CD8-positive, alpha-beta T cell (primary cell): ENCODE measurements at regions of chr2 and their contacts with region 1.

Region 1: GRCh38 chr2:241609859-241610793 is 26.8 kb downstream of the THAP4 start:
- DNase-seq: peak; percentile 81 to 96 (median 92)
- ATAC-seq: peak; percentile 99
- H3K4me3 ChIP-seq: peak overlapping the region; percentile 53 to 59
- H3K4me3 Mint-ChIP-seq: peak overlapping the region; percentile 63
- H3K27ac ChIP-seq: peak overlapping the region; percentile 51 to 77
- H3K27ac Mint-ChIP-seq: peak overlapping the region; percentile 72
- H3K4me1 ChIP-seq: peaks cover 23% of the 10 kb centered on the region
- H3K4me1 Mint-ChIP-seq: peaks cover 26% of the 10 kb centered on the region
- H3K27me3 ChIP-seq: no peaks in the 10 kb centered on the region
- H3K27me3 Mint-ChIP-seq: no peaks in the 10 kb centered on the region
- CTCF ChIP-seq: peak; percentile 63

Region 2: DNA sequence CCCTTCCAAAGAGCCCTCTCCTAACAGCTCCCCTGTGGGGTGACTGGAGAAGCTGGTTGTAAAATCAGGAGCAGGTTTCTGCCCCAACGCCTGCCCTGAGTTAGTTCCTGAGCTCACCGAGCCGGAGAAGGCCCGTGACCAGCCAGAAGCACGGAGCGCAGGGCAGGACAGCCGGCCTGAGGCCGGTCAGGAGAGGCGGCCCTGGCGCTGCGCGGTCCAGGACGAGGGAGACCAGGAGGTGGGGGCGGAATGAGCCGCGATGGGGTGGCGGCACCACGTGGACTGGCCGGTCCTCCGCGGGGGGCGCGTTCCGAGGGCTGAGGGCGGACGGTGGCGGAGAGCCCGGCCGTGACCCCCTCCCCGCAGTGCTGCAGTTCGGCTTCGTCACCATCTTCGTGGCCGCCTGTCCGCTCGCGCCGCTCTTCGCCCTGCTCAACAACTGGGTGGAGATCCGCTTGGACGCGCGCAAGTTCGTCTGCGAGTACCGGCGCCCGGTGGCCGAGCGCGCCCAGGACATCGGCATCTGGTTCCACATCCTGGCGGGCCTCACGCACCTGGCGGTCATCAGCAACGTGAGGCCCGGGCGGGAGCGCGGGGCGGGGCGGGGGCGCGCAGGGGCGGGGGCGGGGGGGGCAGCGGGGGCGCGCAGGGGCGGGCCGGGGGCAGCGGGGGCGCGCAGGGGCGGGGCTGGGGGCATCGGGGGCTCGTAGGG is 392.6 kb before region 1 on chr2:
- CTCF ChIA-PET with region 1: no interaction called
- POLR2A ChIA-PET with region 1: no interaction called
- intact Hi-C with region 1: loop called in 1 of 2 experiments (anchors 5 kb)
- DNase-seq: peak in 5 of 9 experiments; percentile 25 to 64 (median 58)
- ATAC-seq: peak; percentile 42
- H3K4me3 ChIP-seq: peak overlapping the region; percentile 48 to 59
- H3K4me3 Mint-ChIP-seq: peak overlapping the region; percentile 77
- H3K27ac ChIP-seq: peak overlapping the region in 1 of 2 experiments; percentile 32
- H3K27ac Mint-ChIP-seq: no peak overlapping the region
- H3K4me1 ChIP-seq: peaks cover 5% of the 10 kb centered on the region
- H3K4me1 Mint-ChIP-seq: peaks cover 14% of the 10 kb centered on the region
- H3K27me3 ChIP-seq: no peaks in the 10 kb centered on the region
- H3K27me3 Mint-ChIP-seq: no peaks in the 10 kb centered on the region
- CTCF ChIP-seq: no peak

Region 3: DNA sequence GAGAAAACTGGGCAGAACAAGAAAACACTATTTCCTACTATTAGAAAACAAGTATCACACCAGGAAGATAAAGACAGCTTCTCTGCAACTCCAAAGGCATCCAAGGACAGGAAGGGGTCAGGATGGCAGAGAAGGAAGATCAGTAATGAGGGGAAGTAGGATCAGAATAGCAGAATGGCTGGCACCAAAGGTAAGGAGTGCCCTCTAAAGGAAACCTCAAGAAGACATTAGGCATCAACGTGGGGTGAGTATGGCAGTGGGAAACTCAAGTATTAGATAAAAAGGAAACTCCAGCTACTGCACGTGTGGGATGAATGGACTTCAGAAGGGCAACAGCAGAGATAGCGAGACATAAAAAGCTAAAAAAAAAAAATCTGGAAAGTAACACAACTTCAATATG is 320.5 kb before region 1 on chr2:
- CTCF ChIA-PET with region 1: no interaction called
- POLR2A ChIA-PET with region 1: no interaction called
- intact Hi-C with region 1: no loop called
- DNase-seq: no peak
- ATAC-seq: no peak
- H3K4me3 ChIP-seq: no peak overlapping the region
- H3K4me3 Mint-ChIP-seq: no peak overlapping the region
- H3K27ac ChIP-seq: no peak overlapping the region
- H3K27ac Mint-ChIP-seq: peak overlapping the region; percentile 7
- H3K4me1 ChIP-seq: peaks cover 13% of the 10 kb centered on the region
- H3K4me1 Mint-ChIP-seq: peaks cover 63% of the 10 kb centered on the region
- H3K27me3 ChIP-seq: no peaks in the 10 kb centered on the region
- H3K27me3 Mint-ChIP-seq: no peaks in the 10 kb centered on the region
- CTCF ChIP-seq: no peak

Region 4: DNA sequence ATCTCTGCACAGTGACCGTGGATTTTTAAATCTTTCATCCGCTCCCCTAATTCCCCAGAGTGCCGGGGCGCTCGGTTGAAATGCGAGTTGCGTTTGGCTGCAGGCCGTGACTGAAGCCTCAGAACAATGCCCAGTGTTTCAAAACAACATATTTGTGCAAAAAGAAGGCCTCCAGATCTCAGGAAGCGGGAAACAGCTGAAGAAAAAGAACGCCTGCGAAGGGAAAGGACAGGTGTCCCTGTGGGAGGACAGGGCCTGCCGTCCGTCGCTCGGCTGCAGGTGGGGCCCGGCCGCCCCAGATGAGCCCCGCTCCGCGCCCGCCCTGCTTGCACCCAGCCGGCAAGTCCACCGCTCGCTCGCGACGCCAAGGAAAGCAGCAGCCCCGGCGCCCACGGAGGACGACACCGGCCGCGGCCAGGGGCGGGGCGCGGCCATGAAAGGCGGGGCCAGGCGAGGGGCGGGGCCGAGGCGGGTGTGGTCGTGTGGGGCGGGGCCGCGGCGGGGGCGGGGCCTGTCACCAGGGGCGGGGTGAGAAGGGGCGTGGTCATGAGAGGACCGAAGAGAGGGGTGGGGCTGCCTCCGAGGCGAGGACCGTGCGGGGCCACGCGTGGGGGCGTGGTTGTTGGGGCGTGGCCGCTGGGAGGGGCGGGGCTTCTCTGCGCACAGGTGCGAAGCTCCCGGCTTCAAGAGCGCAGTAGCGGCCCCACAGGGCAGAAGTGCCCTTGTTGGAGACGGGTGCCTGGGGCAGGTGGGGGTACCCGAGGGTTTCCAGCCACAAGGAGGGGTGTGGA is 69.2 kb before region 1 on chr2:
- CTCF ChIA-PET with region 1: no interaction called
- POLR2A ChIA-PET with region 1: no interaction called
- intact Hi-C with region 1: loop called in 1 of 2 experiments (anchors 2 kb)
- DNase-seq: peak; percentile 17 to 68 (median 57)
- ATAC-seq: peak; percentile 91
- H3K4me3 ChIP-seq: no peak overlapping the region
- H3K4me3 Mint-ChIP-seq: peak overlapping the region; percentile 70
- H3K27ac ChIP-seq: no peak overlapping the region
- H3K27ac Mint-ChIP-seq: no peak overlapping the region
- H3K4me1 ChIP-seq: peaks cover 5% of the 10 kb centered on the region
- H3K4me1 Mint-ChIP-seq: peaks cover 3% of the 10 kb centered on the region
- H3K27me3 ChIP-seq: peaks cover 10 to 15% of the 10 kb centered on the region in 2 experiments
- H3K27me3 Mint-ChIP-seq: peaks cover 23% of the 10 kb centered on the region
- CTCF ChIP-seq: no peak